OCI-LY7 (cell line): ENCODE measurements at regions of chr13 and their contacts with region 1.

Region 1: GRCh38 chr13:67134417-67135129 is 95.6 kb downstream of the PCDH9 start:
- DNase-seq: peak; percentile 4
- H3K4me3 ChIP-seq: peak overlapping the region; percentile 47
- H3K27ac ChIP-seq: no peak overlapping the region
- H3K4me1 ChIP-seq: peaks cover 8% of the 10 kb centered on the region
- CTCF ChIP-seq: no peak

Region 2: DNA sequence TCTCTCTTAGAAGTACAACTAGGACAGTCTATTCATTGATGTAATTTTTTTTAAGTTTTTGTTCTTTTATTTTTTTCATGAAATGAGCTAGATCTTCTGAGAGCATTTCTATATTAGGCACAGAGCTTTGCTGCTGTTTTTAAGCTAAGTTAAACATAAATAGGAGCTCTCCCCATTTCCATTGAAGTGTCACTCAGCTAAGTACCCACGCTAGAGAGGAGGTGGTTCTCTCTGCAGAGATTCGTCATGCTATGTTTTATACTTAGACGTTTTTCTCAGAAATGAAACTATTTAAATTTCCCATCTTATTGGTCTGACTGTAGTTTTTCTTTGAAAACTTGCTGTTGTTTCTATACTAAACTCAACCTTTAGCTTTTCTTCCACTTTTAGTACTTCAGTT is 176.0 kb before region 1 on chr13:
- CTCF ChIA-PET with region 1: no interaction called
- POLR2A ChIA-PET with region 1: no interaction called
- intact Hi-C with region 1: no loop called
- DNase-seq: no peak
- H3K4me3 ChIP-seq: no peak overlapping the region
- H3K27ac ChIP-seq: no peak overlapping the region
- H3K4me1 ChIP-seq: no peaks in the 10 kb centered on the region
- CTCF ChIP-seq: no peak

Region 3: DNA sequence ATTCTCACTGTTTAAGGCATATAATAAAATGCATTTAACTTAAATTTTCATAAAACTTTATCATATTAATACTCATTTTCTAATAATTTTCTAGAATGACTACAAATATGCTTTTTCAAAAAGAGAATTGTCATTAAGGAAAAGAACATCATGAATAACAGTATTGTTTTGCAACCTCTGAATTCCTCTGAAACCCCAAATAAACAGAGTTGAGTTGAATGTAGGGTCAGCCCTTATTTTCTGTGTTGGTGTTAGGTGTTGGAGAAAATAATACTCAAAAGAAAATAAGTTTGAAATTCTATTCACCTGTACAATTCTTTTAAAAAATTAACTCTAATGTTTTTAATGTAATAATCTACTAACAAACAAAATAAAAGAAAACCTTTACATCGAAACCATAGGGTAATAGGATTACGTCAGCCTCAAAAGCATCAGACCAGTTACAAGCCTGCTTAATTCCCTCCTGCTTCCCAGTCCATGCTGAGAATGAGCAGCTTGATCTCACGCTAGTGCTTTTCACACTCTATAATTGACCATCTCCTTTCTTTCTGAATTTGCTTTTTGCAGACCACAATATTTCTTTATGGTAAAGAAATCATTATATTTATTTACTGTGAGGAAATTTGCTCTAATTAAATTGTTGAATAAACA is 65.3 kb before region 1 on chr13:
- CTCF ChIA-PET with region 1: no interaction called
- POLR2A ChIA-PET with region 1: no interaction called
- intact Hi-C with region 1: no loop called
- DNase-seq: no peak
- H3K4me3 ChIP-seq: no peak overlapping the region
- H3K27ac ChIP-seq: no peak overlapping the region
- H3K4me1 ChIP-seq: no peaks in the 10 kb centered on the region
- CTCF ChIP-seq: no peak

Region 4: DNA sequence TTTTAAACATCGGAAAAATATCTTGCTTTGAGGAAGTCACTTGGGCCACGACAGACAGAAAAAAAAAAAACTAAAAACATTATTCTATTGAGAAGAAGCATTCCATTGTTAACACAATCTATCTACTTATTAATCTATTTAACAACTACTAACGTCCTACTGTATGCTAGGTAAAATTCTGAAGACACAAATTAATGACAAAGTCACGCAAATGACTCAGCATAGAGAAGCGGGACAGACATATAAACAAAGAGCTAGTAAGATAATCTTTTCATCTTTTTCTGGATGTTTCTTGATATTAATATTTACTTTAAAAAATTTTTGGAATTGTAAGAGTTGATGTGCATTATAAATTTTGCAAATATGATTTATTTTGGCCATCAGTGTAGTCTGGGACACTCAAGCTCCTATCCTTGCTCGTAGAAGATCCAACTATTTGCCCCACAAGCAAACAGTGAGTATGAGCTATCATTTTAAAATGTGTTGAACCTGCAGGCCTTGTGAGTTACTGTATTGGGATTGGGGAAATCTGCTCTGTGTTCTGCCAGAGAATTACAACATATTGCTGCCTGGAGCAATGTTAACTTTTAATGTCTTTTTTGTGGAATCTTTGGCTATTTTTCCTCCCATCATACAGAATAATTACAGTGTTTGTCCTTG is 13.6 kb before region 1 on chr13:
- CTCF ChIA-PET with region 1: no interaction called
- POLR2A ChIA-PET with region 1: interaction called, 11 read pairs
- intact Hi-C with region 1: no loop called
- DNase-seq: no peak
- H3K4me3 ChIP-seq: no peak overlapping the region
- H3K27ac ChIP-seq: no peak overlapping the region
- H3K4me1 ChIP-seq: peaks cover 4% of the 10 kb centered on the region
- CTCF ChIP-seq: no peak